ENCODE measurements at regions of chr9 and their contacts with region 1.

Region 1: GRCh38 chr9:96217754-96218693 is 84.0 kb downstream of the HSD17B3 start:
- DNase-seq: peak; percentile 42
- H3K4me3 ChIP-seq: peak overlapping the region in 1 of 3 experiments; percentile 38
- H3K27ac ChIP-seq: no peak overlapping the region
- H3K4me1 ChIP-seq: peaks cover 3% of the 10 kb centered on the region
- H3K27me3 ChIP-seq: peaks cover 16% of the 10 kb centered on the region
- CTCF ChIP-seq: peak; percentile 87 to 93

Region 2: GRCh38 chr9:95268681-95269080 is 949.3 kb before region 1 on chr9:
- CTCF ChIA-PET with region 1: no interaction called
- dilution Hi-C with region 1: no loop called
- in situ Hi-C with region 1: no loop called
- intact Hi-C with region 1: loop called (anchors 1 kb)
- DNase-seq: peak; percentile 26
- H3K4me3 ChIP-seq: no peak overlapping the region
- H3K27ac ChIP-seq: no peak overlapping the region
- H3K4me1 ChIP-seq: no peaks in the 10 kb centered on the region
- H3K27me3 ChIP-seq: no peaks in the 10 kb centered on the region
- CTCF ChIP-seq: peak in 1 of 2 donors; percentile 52

Region 3: DNA sequence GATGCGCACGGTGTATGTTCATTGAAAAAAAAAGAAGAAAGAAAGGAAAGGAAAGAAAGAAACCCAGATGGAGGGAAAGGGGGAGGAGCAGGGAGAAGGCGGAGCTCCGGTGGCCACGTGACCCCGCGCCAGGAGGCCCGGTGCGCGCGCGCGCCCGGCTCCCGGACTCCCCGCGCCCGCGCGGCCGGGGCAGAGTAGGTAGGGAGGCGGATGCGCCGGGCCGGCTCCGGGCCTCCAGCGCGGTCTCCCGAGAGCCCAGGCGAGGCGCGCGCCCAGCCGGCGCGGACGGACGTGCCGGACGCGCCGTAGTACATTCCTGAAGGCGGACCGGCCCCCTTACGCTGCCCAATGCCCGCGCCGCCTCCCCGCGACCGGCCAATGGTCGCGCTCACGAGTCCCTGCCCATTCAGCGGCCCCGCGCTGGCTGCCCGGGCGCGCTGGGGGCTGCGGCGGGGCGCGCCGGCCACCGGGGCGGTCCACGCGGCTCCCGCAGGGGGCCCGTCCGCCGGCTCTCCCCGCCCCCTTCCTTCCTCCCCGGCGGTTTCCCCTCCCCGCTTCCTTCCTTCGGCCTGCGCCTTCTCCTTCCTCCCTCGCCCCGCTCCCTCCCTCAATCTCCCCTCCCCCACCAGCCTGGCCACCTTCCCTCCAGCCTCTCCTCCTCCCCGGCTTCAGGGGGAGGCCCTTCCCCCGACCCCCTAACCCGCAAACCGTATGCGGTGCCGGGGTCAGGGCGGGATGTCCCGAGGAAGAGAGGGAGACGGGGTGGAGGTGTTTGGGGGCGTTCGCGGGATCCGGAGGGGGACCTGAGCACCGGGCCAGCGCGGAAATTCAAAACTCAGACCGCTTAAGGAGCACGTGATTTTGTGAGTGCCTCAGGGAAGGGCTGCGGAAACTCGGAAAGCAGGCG is 707.1 kb before region 1 on chr9:
- CTCF ChIA-PET with region 1: no interaction called
- dilution Hi-C with region 1: no loop called
- in situ Hi-C with region 1: no loop called
- intact Hi-C with region 1: loop called (anchors 10 kb)
- DNase-seq: peak; percentile 96
- H3K4me3 ChIP-seq: peak overlapping the region; percentile 83 to 95 (median 89)
- H3K27ac ChIP-seq: peak overlapping the region; percentile 60
- H3K4me1 ChIP-seq: peaks cover 20% of the 10 kb centered on the region
- H3K27me3 ChIP-seq: no peaks in the 10 kb centered on the region
- CTCF ChIP-seq: no peak

Region 4: DNA sequence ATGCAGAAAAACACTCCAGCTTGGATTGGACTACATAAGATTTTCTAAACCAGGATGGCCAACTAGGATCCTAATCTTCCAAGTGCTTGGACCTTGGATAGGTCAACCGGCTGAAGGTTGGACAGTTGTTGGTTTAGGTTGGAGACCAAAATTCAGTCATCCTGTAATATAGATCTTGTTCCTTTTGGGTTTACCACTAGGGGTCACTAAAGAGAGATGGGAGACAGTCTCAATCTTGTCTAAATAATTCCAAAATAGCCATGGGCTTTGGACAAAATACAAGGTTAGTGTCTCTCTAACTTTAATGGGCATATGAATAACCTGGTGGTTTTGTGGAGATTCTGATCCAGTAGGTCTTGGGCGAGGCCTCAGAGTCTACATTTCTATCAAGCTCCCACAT is 491.3 kb before region 1 on chr9:
- CTCF ChIA-PET with region 1: no interaction called
- dilution Hi-C with region 1: no loop called
- in situ Hi-C with region 1: loop called in 1 of 2 experiments (anchors 10 kb)
- intact Hi-C with region 1: loop called (anchors 1 kb)
- DNase-seq: peak; percentile 14
- H3K4me3 ChIP-seq: no peak overlapping the region
- H3K27ac ChIP-seq: no peak overlapping the region
- H3K4me1 ChIP-seq: no peaks in the 10 kb centered on the region
- H3K27me3 ChIP-seq: no peaks in the 10 kb centered on the region
- CTCF ChIP-seq: peak; percentile 75 to 76

Region 5: DNA sequence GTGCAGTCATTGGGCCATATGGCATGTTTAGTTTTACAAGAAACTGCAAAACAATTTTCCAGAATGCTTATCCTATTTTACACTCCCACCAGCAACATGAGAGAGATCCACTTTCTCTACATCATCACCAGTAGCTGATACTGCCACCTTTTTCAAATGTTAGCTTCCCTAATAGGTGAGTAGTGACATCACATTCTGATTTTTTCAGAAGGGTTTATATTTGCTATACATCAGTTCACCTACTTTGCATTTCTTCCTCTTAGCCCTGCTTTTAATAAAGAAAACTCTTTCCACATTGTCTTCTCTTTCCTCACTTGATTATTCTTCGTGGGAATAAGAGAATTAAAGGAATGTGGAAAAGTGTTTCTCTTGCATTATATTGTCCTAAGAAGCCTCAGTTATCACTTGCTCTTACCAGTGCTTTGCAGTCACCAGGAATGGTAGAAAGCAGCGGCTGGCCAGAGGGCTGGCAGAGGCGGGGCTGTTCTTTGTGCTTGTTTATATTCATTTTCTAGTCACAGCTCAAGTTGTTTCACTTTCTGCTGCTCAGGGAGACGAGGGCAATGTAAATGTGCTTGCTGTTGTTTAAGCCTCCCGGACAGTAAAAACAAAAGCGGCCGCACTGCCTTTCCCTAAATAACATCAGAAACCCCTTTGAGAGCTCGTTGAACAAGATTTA is 80.9 kb before region 1 on chr9:
- CTCF ChIA-PET with region 1: no interaction called
- dilution Hi-C with region 1: no loop called
- in situ Hi-C with region 1: no loop called
- intact Hi-C with region 1: no loop called
- DNase-seq: no peak
- H3K4me3 ChIP-seq: no peak overlapping the region
- H3K27ac ChIP-seq: no peak overlapping the region
- H3K4me1 ChIP-seq: no peaks in the 10 kb centered on the region
- H3K27me3 ChIP-seq: peaks cover 5% of the 10 kb centered on the region
- CTCF ChIP-seq: no peak

Region 6: DNA sequence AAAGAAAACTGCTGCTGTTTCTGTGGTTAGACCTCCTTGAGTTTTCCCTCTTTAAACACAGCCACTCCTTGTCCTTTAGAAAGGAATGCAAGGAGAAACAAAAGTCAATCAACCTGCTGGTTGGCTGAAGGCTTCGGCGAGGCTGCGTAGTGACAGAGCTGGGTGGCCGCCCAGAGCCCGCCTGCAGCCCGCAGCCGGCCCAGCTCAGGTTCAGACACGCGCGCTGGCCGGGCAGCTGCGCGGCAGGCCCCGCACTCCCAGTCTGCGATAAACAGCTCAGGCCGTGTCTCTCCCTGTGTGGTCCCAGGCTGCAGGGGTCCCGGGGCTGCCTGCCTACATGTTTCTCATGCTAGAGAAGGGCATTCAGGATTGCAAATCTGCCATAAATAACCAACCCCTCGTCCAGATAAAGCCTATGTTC is 31.4 kb before region 1 on chr9:
- CTCF ChIA-PET with region 1: interaction called, 10 read pairs
- dilution Hi-C with region 1: no loop called
- in situ Hi-C with region 1: no loop called
- intact Hi-C with region 1: no loop called
- DNase-seq: peak; percentile 10
- H3K4me3 ChIP-seq: no peak overlapping the region
- H3K27ac ChIP-seq: no peak overlapping the region
- H3K4me1 ChIP-seq: peaks cover 2% of the 10 kb centered on the region
- H3K27me3 ChIP-seq: peaks cover 3% of the 10 kb centered on the region
- CTCF ChIP-seq: no peak

Region 7: GRCh38 chr9:96317335-96317980 is 99.4 kb after region 1 on chr9:
- CTCF ChIA-PET with region 1: no interaction called
- dilution Hi-C with region 1: no loop called
- in situ Hi-C with region 1: no loop called
- intact Hi-C with region 1: loop called (anchors 1 kb)
- DNase-seq: peak; percentile 24
- H3K4me3 ChIP-seq: no peak overlapping the region
- H3K27ac ChIP-seq: no peak overlapping the region
- H3K4me1 ChIP-seq: no peaks in the 10 kb centered on the region
- H3K27me3 ChIP-seq: peaks cover under 1% of the 10 kb centered on the region
- CTCF ChIP-seq: peak; percentile 86 to 96

Region 8: DNA sequence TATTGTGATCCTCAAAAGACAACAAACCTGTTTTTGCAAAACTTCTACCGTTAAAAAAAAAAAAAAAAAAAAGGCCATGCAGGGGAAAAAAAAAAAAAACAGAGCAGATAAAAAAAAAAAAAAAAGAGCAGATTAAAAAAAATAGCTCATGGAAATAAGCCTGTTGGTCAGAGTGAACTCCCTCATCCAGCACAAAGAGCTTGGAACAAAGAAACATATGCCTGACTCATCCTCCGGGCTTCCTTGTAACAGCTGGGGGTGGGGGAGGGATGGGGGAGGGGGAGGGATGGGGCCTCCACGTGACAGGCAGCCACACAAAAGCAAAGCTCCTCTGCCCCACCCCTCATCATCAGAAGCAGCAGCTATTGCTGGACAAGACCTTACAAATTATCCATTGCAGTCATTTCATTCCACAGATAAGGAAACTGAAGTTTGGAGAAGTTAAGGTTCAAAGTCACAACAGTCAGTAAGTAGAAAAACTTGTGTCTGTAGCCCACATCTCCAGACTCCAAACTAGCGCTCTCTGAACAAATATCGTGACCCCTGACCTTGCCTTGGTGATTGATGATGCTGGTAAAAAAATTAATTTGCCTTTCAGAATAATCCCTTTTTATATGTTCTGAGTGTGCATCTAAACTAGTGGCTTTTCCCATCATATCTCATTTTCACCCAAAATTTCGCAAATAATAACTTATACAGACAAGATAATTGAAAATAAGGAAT is 126.6 kb after region 1 on chr9:
- CTCF ChIA-PET with region 1: interaction called, 10 read pairs
- dilution Hi-C with region 1: no loop called
- in situ Hi-C with region 1: no loop called
- intact Hi-C with region 1: no loop called
- DNase-seq: peak; percentile 76
- H3K4me3 ChIP-seq: no peak overlapping the region
- H3K27ac ChIP-seq: no peak overlapping the region
- H3K4me1 ChIP-seq: peaks cover 20% of the 10 kb centered on the region
- H3K27me3 ChIP-seq: no peaks in the 10 kb centered on the region
- CTCF ChIP-seq: no peak